Activated naive CD4-positive, alpha-beta T cell treated with anti-CD3 and anti-CD28 coated beads for 36 hours (primary cell): ENCODE measurements at regions of chr2 and their contacts with region 1.

Region 1: DNA sequence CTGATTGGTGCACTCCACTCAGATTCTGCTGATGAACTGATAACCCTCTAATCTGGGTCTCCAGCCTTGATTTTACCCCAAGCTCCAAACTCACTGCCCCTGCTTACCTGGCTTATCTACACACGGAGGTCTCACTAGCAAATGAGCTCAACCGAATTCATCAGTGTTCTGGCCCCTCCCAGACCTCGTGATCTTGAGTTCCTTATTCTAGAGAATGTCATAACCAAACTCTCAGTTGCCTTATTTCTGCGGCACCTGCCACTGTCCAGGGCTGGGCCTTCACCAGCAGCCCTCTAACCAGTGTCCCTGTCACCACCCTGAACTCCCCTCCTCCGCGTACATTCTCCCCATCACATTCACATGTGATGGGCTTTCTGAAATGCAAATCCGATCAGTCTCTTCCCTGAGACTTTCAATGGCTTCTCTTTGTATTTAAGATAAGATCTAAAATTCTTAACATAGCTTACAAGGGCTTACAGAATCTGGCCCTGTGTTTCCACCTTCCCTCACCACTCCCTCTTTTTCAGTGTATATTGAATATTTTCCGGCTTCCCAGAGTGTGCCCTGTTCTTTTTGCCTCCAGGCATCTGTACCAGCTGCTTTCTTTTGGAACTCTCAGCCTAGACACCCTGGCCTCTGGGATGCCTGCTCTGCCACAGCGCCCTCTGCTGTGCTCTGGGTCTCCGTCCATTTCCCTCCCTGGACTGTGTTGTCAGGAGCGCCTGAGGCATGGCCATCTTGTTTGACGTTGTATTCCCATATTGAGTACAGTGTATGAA is 31.1 kb downstream of the NAB1 start:
- DNase-seq: peak; percentile 75
- H3K4me3 Mint-ChIP-seq: peak overlapping the region; percentile 13
- H3K27ac Mint-ChIP-seq: peak overlapping the region; percentile 81
- H3K4me1 Mint-ChIP-seq: peaks cover 52% of the 10 kb centered on the region
- H3K27me3 Mint-ChIP-seq: no peaks in the 10 kb centered on the region

Region 2: DNA sequence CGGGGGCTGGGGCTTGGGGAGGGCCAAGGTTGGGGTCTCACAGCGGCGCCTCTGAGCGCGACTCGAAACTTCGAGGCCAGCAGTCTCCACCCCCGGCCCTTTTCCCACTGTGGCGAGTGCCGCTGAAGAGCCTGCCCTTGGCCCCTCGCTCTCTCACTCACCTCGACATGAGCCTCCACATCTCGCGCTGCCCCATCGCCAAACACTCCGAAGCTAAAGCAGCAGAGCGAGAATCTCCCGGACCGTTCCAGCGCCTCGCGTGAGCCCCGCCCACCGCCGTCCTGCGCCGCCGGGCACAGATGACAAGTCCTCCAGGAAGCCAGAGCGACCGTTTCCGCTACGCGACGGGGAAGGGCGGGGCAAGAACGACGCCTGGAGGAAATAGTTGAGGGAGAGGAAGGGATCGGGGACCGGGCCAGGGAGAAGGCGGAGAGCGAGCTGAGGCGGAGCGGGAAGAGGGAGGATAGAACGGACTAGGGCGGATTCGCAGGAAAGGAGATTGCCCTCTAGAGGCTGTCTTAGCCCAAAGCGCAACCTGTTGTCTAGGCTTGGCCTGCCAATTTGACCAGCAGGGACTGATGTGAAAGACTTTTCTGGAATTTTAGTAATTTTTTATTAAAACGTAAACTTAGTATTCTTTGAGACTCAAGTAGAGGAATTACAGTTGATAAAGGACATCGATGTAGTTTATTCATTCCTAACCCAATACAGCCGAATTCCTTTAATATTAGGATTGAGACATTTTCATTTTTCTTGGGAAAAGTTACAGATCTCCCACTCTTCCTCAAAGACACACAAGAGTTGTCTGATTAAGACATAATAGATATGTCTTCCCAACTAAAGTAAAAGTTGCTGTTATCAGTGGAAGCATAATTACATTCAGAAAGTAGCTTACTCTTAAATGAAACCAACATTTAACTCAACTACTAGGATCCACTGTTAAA is 360.2 kb before region 1 on chr2 and contains the start of gene HIBCH:
- CTCF ChIA-PET with region 1: no interaction called
- intact Hi-C with region 1: loop called (anchors 1 kb)
- DNase-seq: peak; percentile 94
- H3K4me3 Mint-ChIP-seq: peak within 1 kb of the TSS; percentile 91
- H3K27ac Mint-ChIP-seq: peak within 1 kb of the TSS; percentile 88
- H3K4me1 Mint-ChIP-seq: peaks cover 39% of the 10 kb centered on the region
- H3K27me3 Mint-ChIP-seq: no peaks in the 10 kb centered on the region
- total RNA-seq, gene HIBCH: 19.2 TPM

Region 3: DNA sequence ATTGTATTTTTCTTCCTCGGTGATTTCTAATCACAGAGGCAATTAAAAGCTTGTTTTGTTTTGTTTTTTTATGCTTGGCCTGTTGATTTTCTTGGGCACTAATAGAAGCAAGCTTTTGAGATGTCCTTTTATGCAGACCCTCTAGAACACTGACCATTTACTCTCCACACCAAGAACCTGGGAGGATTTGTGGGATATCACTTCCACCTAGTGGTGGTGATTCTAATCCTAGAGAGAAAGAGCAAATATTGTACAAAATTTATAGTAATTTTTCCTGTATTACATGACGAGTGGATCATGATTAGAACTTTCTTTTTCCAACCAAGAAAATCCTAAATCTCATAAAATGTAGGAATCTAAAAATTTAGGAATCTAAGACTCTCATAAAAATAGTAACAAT is 168.9 kb before region 1 on chr2:
- CTCF ChIA-PET with region 1: interaction called, 3 read pairs
- intact Hi-C with region 1: loop called (anchors 1 kb)
- DNase-seq: no peak
- H3K4me3 Mint-ChIP-seq: no peak overlapping the region
- H3K27ac Mint-ChIP-seq: no peak overlapping the region
- H3K4me1 Mint-ChIP-seq: peaks cover 26% of the 10 kb centered on the region
- H3K27me3 Mint-ChIP-seq: no peaks in the 10 kb centered on the region

Region 4: GRCh38 chr2:190648289-190649034 is 31.5 kb before region 1 on chr2:
- CTCF ChIA-PET with region 1: interaction called, 8 read pairs
- intact Hi-C with region 1: loop called (anchors 1 kb)
- DNase-seq: peak; percentile 81
- H3K4me3 Mint-ChIP-seq: peak overlapping the region; percentile 68
- H3K27ac Mint-ChIP-seq: peak overlapping the region; percentile 76
- H3K4me1 Mint-ChIP-seq: peaks cover 43% of the 10 kb centered on the region
- H3K27me3 Mint-ChIP-seq: no peaks in the 10 kb centered on the region

Region 5: DNA sequence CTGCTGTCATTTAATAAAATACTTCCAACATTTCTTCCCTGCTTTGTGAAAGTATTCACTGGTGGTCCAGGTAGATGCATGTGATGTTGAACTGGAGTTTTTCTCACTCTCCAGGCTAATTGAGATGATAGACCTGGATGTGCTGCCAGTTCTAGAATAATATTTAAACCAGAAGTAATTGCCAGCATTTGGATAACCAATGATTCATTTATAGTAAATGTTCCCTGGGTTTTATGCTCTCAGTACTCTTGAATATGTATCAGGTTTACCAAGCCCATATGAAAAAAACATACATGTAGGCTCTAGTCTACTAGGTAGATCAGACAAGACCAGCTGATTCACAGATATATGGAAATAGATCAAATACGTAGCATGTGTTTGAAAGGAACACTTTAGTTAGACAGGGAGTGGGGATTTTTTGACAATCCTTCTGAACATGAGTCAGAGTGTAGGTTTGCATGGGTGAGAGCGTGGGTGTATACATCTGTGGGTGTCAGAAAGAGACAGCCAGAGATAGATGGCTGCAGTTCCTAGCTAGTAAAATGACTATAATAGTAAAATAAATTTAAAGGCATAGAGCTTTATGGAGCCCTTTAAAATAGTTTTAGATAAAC is 84.0 kb after region 1 on chr2:
- CTCF ChIA-PET with region 1: interaction called, 5 read pairs
- intact Hi-C with region 1: loop called (anchors 1 kb)
- DNase-seq: peak; percentile 78
- H3K4me3 Mint-ChIP-seq: no peak overlapping the region
- H3K27ac Mint-ChIP-seq: peak overlapping the region; percentile 7
- H3K4me1 Mint-ChIP-seq: peaks cover 56% of the 10 kb centered on the region
- H3K27me3 Mint-ChIP-seq: no peaks in the 10 kb centered on the region

Region 6: GRCh38 chr2:191114403-191114886 is 434.4 kb after region 1 on chr2:
- CTCF ChIA-PET with region 1: no interaction called
- intact Hi-C with region 1: loop called (anchors 1 kb)
- DNase-seq: peak; percentile 74
- H3K4me3 Mint-ChIP-seq: peak overlapping the region; percentile 57
- H3K27ac Mint-ChIP-seq: peak overlapping the region; percentile 87
- H3K4me1 Mint-ChIP-seq: peaks cover 78% of the 10 kb centered on the region
- H3K27me3 Mint-ChIP-seq: no peaks in the 10 kb centered on the region